ENCODE measurements at regions of chr4 and their contacts with region 1.

Region 1: DNA sequence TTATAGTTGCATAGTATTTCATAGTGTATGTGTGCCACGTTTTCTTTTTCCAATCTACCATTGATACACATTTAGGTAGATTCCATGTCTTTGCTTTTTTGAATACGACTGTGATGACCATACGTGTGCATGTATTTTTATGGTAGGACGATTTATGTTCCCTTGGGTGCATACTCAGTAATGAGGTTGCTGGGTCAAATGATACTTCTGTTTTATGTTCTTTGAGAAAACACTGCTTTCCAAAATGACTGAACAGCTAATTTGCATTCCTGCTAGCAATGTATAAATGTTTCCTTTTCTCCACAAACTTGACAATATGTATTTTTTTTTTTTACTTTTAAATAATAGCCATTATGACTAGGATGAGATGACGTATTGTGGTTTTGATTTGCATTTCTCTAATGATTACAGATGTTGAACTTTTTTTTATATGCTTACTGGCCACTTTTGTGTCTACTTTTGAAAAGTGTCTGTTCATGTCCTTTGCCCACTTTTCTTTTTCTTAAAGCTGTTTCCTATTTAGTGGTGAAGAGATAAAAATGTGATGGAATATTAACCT is 969.5 kb upstream of the NDST4 start:
- DNase-seq: no peak
- H3K4me3 ChIP-seq: no peak overlapping the region
- H3K27ac ChIP-seq: no peak overlapping the region
- H3K4me1 ChIP-seq: no peaks in the 10 kb centered on the region
- H3K27me3 ChIP-seq: no peaks in the 10 kb centered on the region
- CTCF ChIP-seq: no peak
- EP300 ChIP-seq: no peak
- POLR2A ChIP-seq: no peak

Region 2: GRCh38 chr4:114442856-114443255 is 1640.0 kb before region 1 on chr4:
- intact Hi-C with region 1: loop called in 1 of 4 experiments (anchors 5 kb)
- DNase-seq: no peak
- H3K4me3 ChIP-seq: no peak overlapping the region
- H3K27ac ChIP-seq: no peak overlapping the region
- H3K4me1 ChIP-seq: no peaks in the 10 kb centered on the region
- H3K27me3 ChIP-seq: no peaks in the 10 kb centered on the region
- CTCF ChIP-seq: no peak
- EP300 ChIP-seq: no peak
- POLR2A ChIP-seq: no peak

Region 3: GRCh38 chr4:115796160-115796559 is 286.7 kb before region 1 on chr4:
- intact Hi-C with region 1: no loop called
- DNase-seq: no peak
- H3K4me3 ChIP-seq: no peak overlapping the region
- H3K27ac ChIP-seq: no peak overlapping the region
- H3K4me1 ChIP-seq: no peaks in the 10 kb centered on the region
- H3K27me3 ChIP-seq: no peaks in the 10 kb centered on the region
- CTCF ChIP-seq: no peak
- EP300 ChIP-seq: no peak
- POLR2A ChIP-seq: no peak